ENCODE measurements at regions of chr17 and their contacts with region 1.

Region 1: GRCh38 chr17:9402590-9403199 is 172.9 kb downstream of the STX8 start:
- DNase-seq: peak; percentile 48
- H3K4me3 Mint-ChIP-seq: no peak overlapping the region
- H3K27ac Mint-ChIP-seq: no peak overlapping the region
- H3K4me1 Mint-ChIP-seq: no peaks in the 10 kb centered on the region
- H3K27me3 Mint-ChIP-seq: no peaks in the 10 kb centered on the region

Region 2: GRCh38 chr17:9459211-9459610 is 56.5 kb after region 1 on chr17:
- CTCF ChIA-PET with region 1: no interaction called
- POLR2A ChIA-PET with region 1: no interaction called
- intact Hi-C with region 1: no loop called
- DNase-seq: no peak
- H3K4me3 Mint-ChIP-seq: no peak overlapping the region
- H3K27ac Mint-ChIP-seq: no peak overlapping the region
- H3K4me1 Mint-ChIP-seq: peaks cover 2% of the 10 kb centered on the region
- H3K27me3 Mint-ChIP-seq: no peaks in the 10 kb centered on the region

Region 3: DNA sequence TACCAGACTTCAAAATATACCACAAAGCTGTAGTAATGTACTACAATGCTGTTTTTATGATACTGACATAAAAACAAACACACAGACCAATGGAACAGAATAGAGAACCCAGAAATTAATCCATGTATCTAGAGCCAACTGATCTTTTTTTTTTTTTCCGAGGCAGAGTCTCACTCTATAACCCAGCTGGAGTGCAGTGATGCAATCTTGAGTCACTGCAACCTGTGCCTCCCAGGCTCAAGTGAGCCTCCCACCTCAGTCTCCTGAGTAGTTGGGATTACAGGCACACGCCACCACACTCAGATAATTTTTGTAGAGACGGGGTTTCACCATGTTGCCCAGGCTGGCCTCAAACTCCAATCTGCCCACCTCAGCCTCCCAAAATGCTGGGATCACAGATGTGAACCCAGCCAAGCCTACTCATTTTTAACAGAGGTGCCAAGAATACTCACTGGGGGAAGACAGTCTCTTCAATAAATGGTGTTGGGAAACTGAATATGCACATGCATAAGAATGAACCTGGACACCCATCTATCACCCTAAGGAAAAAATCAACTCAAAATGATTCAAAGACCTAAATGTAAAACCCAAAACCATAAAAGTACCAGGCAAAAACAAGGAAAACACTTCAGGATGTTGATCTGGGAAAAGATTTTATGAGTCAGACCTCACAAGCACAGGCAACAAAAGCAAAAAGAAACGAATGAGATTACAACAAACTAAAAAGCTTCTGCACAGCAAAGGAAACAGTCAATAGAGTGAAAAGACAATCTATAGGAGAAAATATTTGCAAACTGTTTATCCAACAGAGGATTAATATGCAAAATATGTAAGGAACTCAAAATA is 109.9 kb after region 1 on chr17:
- CTCF ChIA-PET with region 1: interaction called, 3 read pairs
- POLR2A ChIA-PET with region 1: no interaction called
- intact Hi-C with region 1: loop called (anchors 10 kb)
- DNase-seq: no peak
- H3K4me3 Mint-ChIP-seq: no peak overlapping the region
- H3K27ac Mint-ChIP-seq: no peak overlapping the region
- H3K4me1 Mint-ChIP-seq: peaks cover 15% of the 10 kb centered on the region
- H3K27me3 Mint-ChIP-seq: no peaks in the 10 kb centered on the region